ENCODE measurements at regions of chr13 and their contacts with region 1.

Region 1: DNA sequence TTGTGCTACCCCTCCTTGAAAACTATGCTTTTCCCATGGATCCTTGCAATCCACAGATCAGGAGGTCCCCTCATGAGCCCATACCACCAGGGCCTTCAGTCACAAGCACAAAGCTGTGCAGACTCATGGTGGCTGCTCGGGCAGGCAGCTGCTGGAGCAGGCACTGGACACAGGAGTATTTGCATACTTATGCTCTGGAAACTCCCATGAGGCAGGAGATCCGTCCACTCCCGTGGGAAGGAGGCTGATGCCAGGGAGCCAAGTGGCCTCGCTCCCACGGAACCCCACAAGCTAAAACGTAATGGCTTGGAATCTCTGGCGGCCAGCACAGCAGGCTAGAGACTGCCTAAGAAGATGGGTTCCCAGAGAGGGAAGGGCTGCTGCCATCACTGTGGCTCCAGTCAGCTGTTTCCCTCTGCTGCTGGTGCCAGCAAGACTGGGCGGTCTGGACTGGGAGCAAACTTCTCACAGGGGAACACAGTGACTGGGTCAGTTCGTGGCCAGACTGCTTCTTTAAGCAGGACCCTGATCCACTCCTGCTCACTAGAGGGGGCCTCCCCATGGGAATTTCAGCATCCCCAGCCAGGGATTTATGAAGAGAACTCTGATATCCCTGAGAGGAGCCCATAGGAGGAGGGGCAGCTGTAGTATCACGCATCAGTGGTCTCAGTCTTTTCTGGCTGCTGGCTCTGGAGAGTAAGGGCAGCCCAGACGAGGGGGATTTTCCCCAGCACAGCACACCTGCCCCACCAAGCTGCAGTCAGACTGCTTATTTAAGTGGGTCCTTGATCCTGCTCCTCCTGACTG is 370.3 kb upstream of the ATXN8OS start:
- DNase-seq: no peak
- ATAC-seq: no peak

Region 2: DNA sequence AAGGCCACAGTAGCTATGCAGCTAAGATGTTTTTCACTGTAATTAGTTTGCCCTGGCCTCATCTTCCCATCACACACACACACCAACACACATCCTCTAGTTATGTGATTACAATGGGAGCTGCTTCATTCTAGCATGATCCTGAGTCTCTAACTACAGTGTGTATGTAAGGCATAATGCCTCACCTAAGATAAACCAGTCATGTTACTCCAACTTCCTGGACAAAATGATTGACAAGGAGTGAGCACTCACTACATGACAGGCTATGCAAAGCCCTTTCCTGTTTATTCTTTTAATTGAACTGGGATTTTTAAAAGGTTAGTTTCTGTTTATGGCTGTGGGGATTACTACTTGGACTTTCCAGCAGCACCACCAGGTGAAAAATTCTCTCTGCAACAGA is 30.5 kb before region 1 on chr13:
- intact Hi-C with region 1: loop called (anchors 2 kb)
- DNase-seq: no peak
- ATAC-seq: no peak

Measured in Right ventricle myocardium superior (tissue), 1 donor.